ENCODE measurements at regions of chr5 and their contacts with region 1.

Region 1: GRCh38 chr5:103232393-103232999 is 26.1 kb upstream of the MACIR start:
- DNase-seq: peak; percentile 44
- H3K4me3 ChIP-seq: no peak overlapping the region; a peak in 1 of 4 replicates
- H3K27ac ChIP-seq: no peak overlapping the region
- H3K4me1 ChIP-seq: no peaks in the 10 kb centered on the region; a peak in 1 of 4 replicates
- H3K27me3 ChIP-seq: no peaks in the 10 kb centered on the region
- CTCF ChIP-seq: peak; percentile 65
- EP300 ChIP-seq: no peak
- RAD21 ChIP-seq: peak; percentile 76

Region 2: GRCh38 chr5:103243665-103244064 is 11.2 kb after region 1 on chr5:
- CTCF ChIA-PET with region 1: interaction called, 13 read pairs
- POLR2A ChIA-PET with region 1: no interaction called
- DNase-seq: no peak
- H3K4me3 ChIP-seq: no peak overlapping the region
- H3K27ac ChIP-seq: no peak overlapping the region
- H3K4me1 ChIP-seq: no peaks in the 10 kb centered on the region
- H3K27me3 ChIP-seq: no peaks in the 10 kb centered on the region
- CTCF ChIP-seq: no peak
- EP300 ChIP-seq: no peak
- RAD21 ChIP-seq: no peak

Region 3: GRCh38 chr5:103258368-103258956 is 26.0 kb after region 1 on chr5 and contains the start of gene MACIR:
- CTCF ChIA-PET with region 1: interaction called, 20 read pairs
- POLR2A ChIA-PET with region 1: no interaction called
- DNase-seq: peak; percentile 90
- H3K4me3 ChIP-seq: peak within 1 kb of the TSS; percentile 79 to 81
- H3K27ac ChIP-seq: peak within 1 kb of the TSS; percentile 80 to 96
- H3K4me1 ChIP-seq: peaks cover 3 to 8% of the 10 kb centered on the region in 2 experiments; a peak in 2 of 4 replicates
- H3K27me3 ChIP-seq: no peaks in the 10 kb centered on the region
- CTCF ChIP-seq: peak; percentile 12; the same call in 1 of the 2 replicates
- EP300 ChIP-seq: no peak
- RAD21 ChIP-seq: peak; percentile 23; the same call in 1 of the 2 replicates
- polyA plus RNA-seq, gene MACIR: 24.7 and 36.3 TPM in 2 replicates

Region 4: DNA sequence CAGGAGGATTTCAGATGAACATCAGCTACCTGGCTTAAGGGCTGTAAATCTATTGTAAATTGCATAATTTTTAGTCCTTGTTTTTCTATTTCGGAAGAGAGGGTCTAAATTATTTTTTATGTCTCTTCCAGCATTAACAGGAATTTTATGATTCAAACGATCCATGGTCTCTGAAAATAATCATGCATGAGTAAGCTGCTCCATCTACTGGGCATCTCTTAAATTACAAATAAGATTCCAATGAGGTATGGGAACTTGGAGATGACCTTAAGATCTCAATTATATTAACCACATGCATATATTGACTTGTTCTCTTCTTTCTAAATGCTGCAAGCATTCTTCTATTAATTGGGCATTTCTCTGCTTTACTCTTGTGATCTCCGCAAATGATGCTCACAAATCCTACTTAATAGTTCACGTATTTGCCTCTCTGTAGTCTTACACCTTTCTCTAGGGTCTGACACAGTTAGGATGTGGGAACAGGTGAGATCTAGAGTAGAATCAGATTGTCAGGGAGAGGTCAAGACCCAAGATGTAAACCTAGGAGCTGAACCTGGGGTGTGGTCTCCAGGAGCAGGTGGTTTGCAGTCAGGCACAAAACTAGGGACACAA is 243.2 kb after region 1 on chr5:
- CTCF ChIA-PET with region 1: interaction called, 101 read pairs
- POLR2A ChIA-PET with region 1: no interaction called
- DNase-seq: peak; percentile 9
- H3K4me3 ChIP-seq: no peak overlapping the region; a peak in 1 of 4 replicates
- H3K27ac ChIP-seq: no peak overlapping the region
- H3K4me1 ChIP-seq: no peaks in the 10 kb centered on the region; a peak in 2 of 4 replicates
- H3K27me3 ChIP-seq: no peaks in the 10 kb centered on the region
- CTCF ChIP-seq: peak; percentile 82
- EP300 ChIP-seq: no peak
- RAD21 ChIP-seq: peak; percentile 93

Region 5: DNA sequence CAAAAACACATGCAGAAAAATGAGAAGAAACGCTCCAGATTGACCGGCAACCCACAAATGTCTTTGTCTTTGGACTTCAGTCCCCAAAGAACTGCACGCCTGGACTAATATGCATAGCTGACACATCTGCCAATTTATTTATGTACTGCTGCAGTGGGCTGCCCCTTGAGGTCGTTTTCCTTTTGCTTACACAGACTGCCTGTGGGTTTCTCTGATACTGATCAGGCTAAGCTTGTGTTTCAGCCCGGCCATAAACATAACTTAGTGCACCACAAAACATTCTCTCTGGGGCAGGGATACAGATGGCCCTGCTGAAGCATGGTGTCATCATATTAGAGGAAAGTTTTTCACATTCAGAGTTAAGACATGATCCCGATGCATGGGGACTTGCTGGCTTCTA is 254.7 kb after region 1 on chr5:
- CTCF ChIA-PET with region 1: interaction called, 10 read pairs
- POLR2A ChIA-PET with region 1: no interaction called
- DNase-seq: peak; percentile 43
- H3K4me3 ChIP-seq: no peak overlapping the region
- H3K27ac ChIP-seq: peak overlapping the region in 1 of 2 experiments; percentile 55; a peak in 2 of 4 replicates
- H3K4me1 ChIP-seq: peaks cover 0 to 15% of the 10 kb centered on the region in 2 experiments; a peak in 2 of 4 replicates
- H3K27me3 ChIP-seq: no peaks in the 10 kb centered on the region
- CTCF ChIP-seq: no peak
- EP300 ChIP-seq: peak in 1 of 2 experiments; percentile 49; a peak in 1 of 4 replicates
- RAD21 ChIP-seq: no peak

Measured in SK-N-SH (cell line).